Psoas muscle (tissue), 8 donors: ENCODE measurements at regions of chr18 and their contacts with region 1.

Region 1: GRCh38 chr18:4510711-4511110 is 55.6 kb upstream of the DLGAP1 start:
- DNase-seq: no peak
- ATAC-seq: peak in 3 of 4 donors; percentile 42 to 90 (median 55)
- H3K4me3 ChIP-seq: no peak overlapping the region
- H3K27ac ChIP-seq: no peak overlapping the region
- H3K4me1 ChIP-seq: no peaks in the 10 kb centered on the region
- H3K27me3 ChIP-seq: no peaks in the 10 kb centered on the region
- CTCF ChIP-seq: no peak

Region 2: DNA sequence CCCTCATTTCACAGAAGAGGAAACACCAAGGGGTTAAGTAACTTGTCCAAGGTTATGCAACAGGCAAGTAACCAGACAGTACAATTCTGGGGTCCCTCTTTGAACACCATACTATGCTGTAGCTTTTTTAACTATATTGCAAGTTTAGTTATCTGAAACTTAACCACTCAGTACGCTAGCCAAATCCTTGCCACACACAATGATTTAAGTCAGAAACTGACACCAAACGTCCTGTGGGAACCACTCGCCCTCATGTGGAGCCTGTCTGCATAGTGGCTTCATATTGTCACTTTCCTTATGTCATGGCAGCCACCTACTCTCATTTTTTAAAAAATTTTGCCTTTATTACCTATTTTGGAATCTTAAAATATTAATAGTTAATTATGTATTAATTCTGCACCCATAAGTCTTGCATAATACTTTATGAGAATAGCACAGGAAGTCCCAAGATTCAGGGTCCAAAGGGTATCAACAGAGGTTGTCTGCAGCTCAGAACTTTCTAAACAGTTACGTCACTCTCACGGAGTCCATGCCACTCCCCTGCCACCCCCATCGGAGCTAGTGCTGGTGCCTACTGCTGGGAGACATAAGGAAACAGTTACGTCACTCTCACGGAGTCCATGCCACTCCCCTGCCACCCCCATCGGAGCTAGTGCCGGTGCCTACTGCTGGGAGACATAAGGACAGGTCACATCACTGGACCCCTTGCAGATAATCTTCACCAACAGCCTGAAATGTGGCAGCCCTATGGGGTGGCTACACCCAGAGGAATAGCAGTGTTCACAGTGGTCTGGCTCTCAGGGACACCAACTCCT is 1805.0 kb after region 1 on chr18:
- intact Hi-C with region 1: loop called in 1 of 2 experiments (anchors 10 kb)
- DNase-seq: no peak
- ATAC-seq: no peak
- H3K4me3 ChIP-seq: no peak overlapping the region
- H3K27ac ChIP-seq: no peak overlapping the region
- H3K4me1 ChIP-seq: no peaks in the 10 kb centered on the region
- H3K27me3 ChIP-seq: no peaks in the 10 kb centered on the region
- CTCF ChIP-seq: no peak